T-cell (primary cell): ENCODE measurements at regions of chr10 and their contacts with region 1.

Region 1: DNA sequence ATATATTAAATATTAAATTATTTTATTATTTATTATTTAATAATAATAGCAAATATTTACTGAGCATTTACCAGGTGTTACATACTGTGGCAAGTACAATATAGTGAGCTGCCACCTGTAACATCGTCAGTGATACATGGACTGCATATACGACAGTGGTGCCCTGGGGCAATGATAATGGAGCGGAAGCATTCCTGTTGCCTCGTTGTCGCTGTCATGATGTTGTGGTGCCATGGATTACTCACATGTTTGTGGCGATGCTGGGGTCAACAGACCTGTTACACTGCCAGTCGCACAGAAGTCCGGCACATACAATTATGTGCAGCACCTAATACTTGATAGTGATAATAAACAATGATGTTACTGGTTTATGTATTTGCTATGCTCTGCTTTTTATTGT is 20.6 kb downstream of the CAMK1D start:
- DNase-seq: no peak
- ATAC-seq: no peak
- H3K4me3 ChIP-seq: no peak overlapping the region
- H3K4me3 Mint-ChIP-seq: no peak overlapping the region
- H3K27ac ChIP-seq: no peak overlapping the region
- H3K27ac Mint-ChIP-seq: no peak overlapping the region
- H3K4me1 ChIP-seq: peaks cover 12 to 21% of the 10 kb centered on the region in 2 experiments
- H3K4me1 Mint-ChIP-seq: peaks cover 15 to 26% (median 22%) of the 10 kb centered on the region in 3 donors
- H3K27me3 ChIP-seq: no peaks in the 10 kb centered on the region
- H3K27me3 Mint-ChIP-seq: no peaks in the 10 kb centered on the region

Region 2: GRCh38 chr10:12463459-12463838 is 93.5 kb after region 1 on chr10:
- CTCF ChIA-PET with region 1: interaction called in 1 of 2 experiments, 10 read pairs
- POLR2A ChIA-PET with region 1: no interaction called
- DNase-seq: no peak
- ATAC-seq: no peak
- H3K4me3 ChIP-seq: no peak overlapping the region
- H3K4me3 Mint-ChIP-seq: no peak overlapping the region
- H3K27ac ChIP-seq: no peak overlapping the region
- H3K27ac Mint-ChIP-seq: no peak overlapping the region
- H3K4me1 ChIP-seq: no peaks in the 10 kb centered on the region
- H3K4me1 Mint-ChIP-seq: peaks cover 12 to 33% (median 30%) of the 10 kb centered on the region in 3 donors
- H3K27me3 ChIP-seq: no peaks in the 10 kb centered on the region
- H3K27me3 Mint-ChIP-seq: no peaks in the 10 kb centered on the region

Region 3: DNA sequence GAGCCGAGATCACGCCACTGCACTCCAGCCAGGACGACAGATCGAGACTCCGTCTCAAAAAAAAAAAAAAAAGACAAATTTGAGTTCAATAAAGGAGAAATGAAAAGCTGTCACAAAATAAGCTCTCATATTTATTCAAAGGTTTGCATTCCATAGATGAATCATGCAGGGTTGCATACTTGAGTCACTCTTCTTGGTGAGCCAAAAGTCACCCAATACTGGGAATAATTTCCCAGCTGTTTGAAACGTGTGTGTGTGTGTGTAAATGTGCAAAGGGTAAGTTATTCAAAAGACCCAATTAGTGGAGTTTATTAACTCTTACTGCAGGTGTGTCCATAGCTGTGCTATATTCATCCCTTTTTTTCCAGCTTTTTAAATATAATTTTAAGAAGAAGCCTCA is 333.8 kb after region 1 on chr10:
- CTCF ChIA-PET with region 1: no interaction called
- POLR2A ChIA-PET with region 1: no interaction called
- DNase-seq: no peak
- ATAC-seq: no peak
- H3K4me3 ChIP-seq: no peak overlapping the region
- H3K4me3 Mint-ChIP-seq: no peak overlapping the region
- H3K27ac ChIP-seq: no peak overlapping the region
- H3K27ac Mint-ChIP-seq: no peak overlapping the region
- H3K4me1 ChIP-seq: no peaks in the 10 kb centered on the region
- H3K4me1 Mint-ChIP-seq: peaks cover 5 to 16% (median 10%) of the 10 kb centered on the region in 3 donors
- H3K27me3 ChIP-seq: no peaks in the 10 kb centered on the region
- H3K27me3 Mint-ChIP-seq: no peaks in the 10 kb centered on the region